Gastrocnemius medialis (tissue), 4 donors: ENCODE measurements at regions of chr13 and their contacts with region 1.

Region 1: DNA sequence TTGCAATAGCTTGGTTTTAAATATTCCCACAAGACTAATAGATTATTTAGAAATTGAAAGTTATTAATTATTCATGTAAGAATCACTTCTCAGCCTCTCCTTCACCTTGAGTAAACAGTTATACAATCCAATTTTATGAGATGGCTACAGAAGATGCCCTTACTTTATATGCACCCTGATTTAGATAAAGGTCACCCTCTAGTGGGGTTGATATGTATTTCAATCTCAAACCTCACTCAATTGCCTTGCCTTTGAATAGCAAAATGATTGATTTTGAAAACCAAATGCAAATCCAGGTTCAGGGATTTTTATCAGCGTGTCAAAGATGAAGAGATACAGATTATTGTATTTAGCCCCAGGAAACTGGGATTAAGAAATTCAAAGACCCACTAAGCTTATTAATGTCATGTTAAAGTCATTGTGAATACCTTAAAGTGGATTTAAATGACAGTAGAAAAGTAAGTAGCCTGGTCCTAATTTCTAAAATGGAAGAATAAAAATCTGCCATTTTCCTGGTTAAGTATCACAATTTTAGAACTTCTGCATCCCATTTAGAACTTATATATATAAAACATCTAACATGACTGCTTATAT is 305.1 kb downstream of the ITGBL1 start:
- DNase-seq: no peak
- ATAC-seq: no peak
- H3K4me3 ChIP-seq: no peak overlapping the region
- H3K27ac ChIP-seq: no peak overlapping the region
- H3K4me1 ChIP-seq: no peaks in the 10 kb centered on the region
- H3K27me3 ChIP-seq: no peaks in the 10 kb centered on the region
- CTCF ChIP-seq: peak in 3 of 5 experiments; percentile 12 to 33 (median 22)
- POLR2A ChIP-seq: no peak

Region 2: DNA sequence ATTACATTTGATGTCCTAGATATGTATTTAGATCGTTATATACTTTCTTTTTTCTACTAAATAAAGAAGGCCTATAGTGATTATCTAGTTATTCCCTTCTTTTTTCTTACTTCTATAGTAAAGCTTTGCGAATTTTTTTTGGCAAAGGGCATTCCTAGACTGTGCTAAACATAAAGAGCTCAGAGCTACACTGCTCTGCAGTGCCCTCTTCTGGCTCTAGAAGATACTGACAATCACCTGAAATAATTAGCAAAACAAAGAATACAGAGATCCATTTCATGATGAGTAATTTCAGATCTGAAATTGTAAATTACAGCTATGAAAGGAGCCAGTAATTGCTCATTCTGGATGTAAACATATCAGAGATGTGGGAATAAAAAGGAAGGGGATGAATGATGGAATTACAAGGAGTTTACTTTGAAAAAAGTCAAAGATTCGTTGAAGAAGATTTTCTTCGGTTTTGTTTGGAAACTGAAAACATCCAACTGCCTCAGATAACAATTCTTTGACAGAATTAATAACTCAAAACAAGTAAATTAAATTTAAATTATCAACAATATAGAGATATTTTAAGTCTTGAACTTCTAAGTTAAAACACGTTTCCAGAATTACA is 629.7 kb before region 1 on chr13:
- in situ Hi-C with region 1: loop called in 2 of 4 experiments (anchors 25 kb)
- intact Hi-C with region 1: no loop called
- DNase-seq: no peak
- ATAC-seq: no peak
- H3K4me3 ChIP-seq: no peak overlapping the region
- H3K27ac ChIP-seq: no peak overlapping the region
- H3K4me1 ChIP-seq: no peaks in the 10 kb centered on the region
- H3K27me3 ChIP-seq: no peaks in the 10 kb centered on the region
- CTCF ChIP-seq: peak in 3 of 5 experiments; percentile 32 to 53 (median 44)
- POLR2A ChIP-seq: no peak

Region 3: DNA sequence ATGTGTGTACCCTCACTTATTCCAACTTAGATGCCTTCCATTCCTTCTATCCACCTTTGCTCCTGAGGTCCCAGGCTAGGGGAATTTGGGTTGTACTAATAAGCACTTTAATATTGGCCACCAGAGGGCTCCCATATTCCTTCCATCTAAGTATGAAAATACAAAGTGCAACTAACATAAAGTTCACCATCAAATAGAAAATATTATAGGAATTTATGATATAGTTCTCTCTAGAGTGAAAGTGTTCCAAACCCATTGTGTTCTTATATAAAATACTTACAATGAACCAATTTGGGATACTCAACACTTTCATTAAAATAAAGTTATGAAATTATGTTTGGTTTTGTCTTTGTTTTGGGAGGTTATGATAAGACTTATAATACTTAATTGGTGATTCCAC is 242.8 kb before region 1 on chr13:
- in situ Hi-C with region 1: loop called in 3 of 4 experiments (anchors 10 to 25 kb)
- intact Hi-C with region 1: loop called (anchors 2 kb)
- DNase-seq: no peak
- ATAC-seq: no peak
- H3K4me3 ChIP-seq: no peak overlapping the region
- H3K27ac ChIP-seq: no peak overlapping the region
- H3K4me1 ChIP-seq: no peaks in the 10 kb centered on the region
- H3K27me3 ChIP-seq: no peaks in the 10 kb centered on the region
- CTCF ChIP-seq: peak in 3 of 5 experiments; percentile 34 to 38 (median 34)
- POLR2A ChIP-seq: no peak

Region 4: DNA sequence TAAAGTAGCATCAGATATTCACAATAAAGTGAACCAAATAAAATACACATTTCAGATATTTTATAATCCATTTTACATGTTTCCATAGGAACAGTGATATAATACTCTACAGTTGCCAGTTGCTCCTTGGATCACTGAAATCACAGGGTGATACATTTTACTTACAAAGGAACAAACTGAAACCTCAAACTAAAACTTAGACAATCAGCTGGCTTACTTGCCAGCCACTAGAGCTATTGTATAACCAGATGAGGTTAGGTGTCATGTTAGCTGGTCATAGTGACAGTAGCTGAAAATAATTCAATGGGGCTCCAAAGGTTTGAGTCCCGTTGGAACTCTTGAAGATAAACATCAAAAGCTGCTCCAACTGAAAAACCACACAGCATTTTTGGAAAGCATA is 30.4 kb before region 1 on chr13:
- in situ Hi-C with region 1: no loop called
- intact Hi-C with region 1: no loop called
- DNase-seq: no peak
- ATAC-seq: no peak
- H3K4me3 ChIP-seq: no peak overlapping the region
- H3K27ac ChIP-seq: no peak overlapping the region
- H3K4me1 ChIP-seq: no peaks in the 10 kb centered on the region
- H3K27me3 ChIP-seq: no peaks in the 10 kb centered on the region
- CTCF ChIP-seq: no peak
- POLR2A ChIP-seq: no peak